ENCODE measurements at regions of chr15 and their contacts with region 1.

Region 1: DNA sequence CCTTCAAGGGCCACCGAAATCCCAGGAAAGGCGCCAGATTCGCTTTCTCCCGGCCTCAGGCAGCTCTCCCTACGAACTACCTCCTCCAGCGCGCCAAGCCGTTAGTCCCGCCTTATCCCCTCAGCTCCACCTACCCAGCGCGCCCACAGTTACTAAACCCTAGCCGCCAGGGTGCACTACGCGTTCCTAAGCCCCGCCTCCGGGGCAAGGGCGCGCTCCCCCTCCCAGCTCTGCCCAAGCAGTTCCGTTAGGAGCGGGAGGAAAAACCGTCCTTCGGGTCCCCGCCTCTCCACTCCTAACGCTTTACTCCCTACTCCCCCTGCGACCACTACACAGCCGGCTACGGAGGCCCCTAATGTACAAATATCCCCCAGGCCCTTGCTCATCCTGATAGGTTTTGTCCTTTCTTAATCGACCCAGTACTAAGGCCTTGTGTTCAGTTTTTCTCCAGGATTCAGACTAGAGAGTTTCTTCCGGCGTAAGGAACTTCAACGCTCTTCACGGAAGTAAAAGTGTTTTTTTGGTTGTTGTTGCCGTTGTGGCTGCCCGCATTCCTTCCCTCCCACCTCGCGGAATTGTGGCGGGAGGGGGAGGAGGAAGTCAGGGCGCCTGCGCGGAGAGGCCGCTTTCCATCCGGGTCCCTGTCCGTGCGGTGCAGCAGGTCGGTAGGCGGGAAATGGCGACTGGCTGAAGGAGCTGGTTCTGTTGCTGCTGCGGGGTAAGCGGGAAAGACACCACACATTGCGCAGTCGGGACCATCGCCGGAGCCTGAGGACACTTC is at the start of gene CTDSPL2:
- DNase-seq: peak; percentile 91 to 98 (median 92)
- ATAC-seq: peak; percentile 97
- H3K4me3 ChIP-seq: peak within 1 kb of the TSS; percentile 73
- H3K27ac ChIP-seq: peak within 1 kb of the TSS; percentile 98
- H3K4me1 ChIP-seq: peaks cover 0 to 5% of the 10 kb centered on the region in 2 experiments; a peak in 1 of 5 replicates
- H3K27me3 ChIP-seq: no peaks in the 10 kb centered on the region
- CTCF ChIP-seq: peak; percentile 48 to 64 (median 60); a peak in 5 of 6 replicates
- EP300 ChIP-seq: peak; percentile 66
- POLR2A ChIP-seq: peak; percentile 94
- RAD21 ChIP-seq: no peak
- polyA plus RNA-seq, gene CTDSPL2: 16.8 to 36.0 TPM

Region 2: GRCh38 chr15:43150191-43150929 is 1276.8 kb before region 1 on chr15:
- CTCF ChIA-PET with region 1: no interaction called
- POLR2A ChIA-PET with region 1: no interaction called
- in situ Hi-C with region 1: no loop called
- intact Hi-C with region 1: no loop called
- DNase-seq: peak in 3 of 4 experiments; percentile 17 to 61 (median 60)
- ATAC-seq: no peak
- H3K4me3 ChIP-seq: no peak overlapping the region
- H3K27ac ChIP-seq: no peak overlapping the region
- H3K4me1 ChIP-seq: no peaks in the 10 kb centered on the region
- H3K27me3 ChIP-seq: no peaks in the 10 kb centered on the region
- CTCF ChIP-seq: no peak
- EP300 ChIP-seq: no peak
- POLR2A ChIP-seq: no peak
- RAD21 ChIP-seq: no peak

Region 3: GRCh38 chr15:44215594-44215993 is 211.6 kb before region 1 on chr15:
- CTCF ChIA-PET with region 1: no interaction called
- POLR2A ChIA-PET with region 1: no interaction called
- in situ Hi-C with region 1: no loop called
- intact Hi-C with region 1: loop called (anchors 5 kb)
- DNase-seq: no peak
- ATAC-seq: no peak
- H3K4me3 ChIP-seq: no peak overlapping the region
- H3K27ac ChIP-seq: no peak overlapping the region
- H3K4me1 ChIP-seq: no peaks in the 10 kb centered on the region; a peak in 1 of 5 replicates
- H3K27me3 ChIP-seq: peaks cover 17 to 19% of the 10 kb centered on the region in 2 experiments
- CTCF ChIP-seq: no peak
- EP300 ChIP-seq: no peak
- POLR2A ChIP-seq: no peak
- RAD21 ChIP-seq: no peak

Region 4: DNA sequence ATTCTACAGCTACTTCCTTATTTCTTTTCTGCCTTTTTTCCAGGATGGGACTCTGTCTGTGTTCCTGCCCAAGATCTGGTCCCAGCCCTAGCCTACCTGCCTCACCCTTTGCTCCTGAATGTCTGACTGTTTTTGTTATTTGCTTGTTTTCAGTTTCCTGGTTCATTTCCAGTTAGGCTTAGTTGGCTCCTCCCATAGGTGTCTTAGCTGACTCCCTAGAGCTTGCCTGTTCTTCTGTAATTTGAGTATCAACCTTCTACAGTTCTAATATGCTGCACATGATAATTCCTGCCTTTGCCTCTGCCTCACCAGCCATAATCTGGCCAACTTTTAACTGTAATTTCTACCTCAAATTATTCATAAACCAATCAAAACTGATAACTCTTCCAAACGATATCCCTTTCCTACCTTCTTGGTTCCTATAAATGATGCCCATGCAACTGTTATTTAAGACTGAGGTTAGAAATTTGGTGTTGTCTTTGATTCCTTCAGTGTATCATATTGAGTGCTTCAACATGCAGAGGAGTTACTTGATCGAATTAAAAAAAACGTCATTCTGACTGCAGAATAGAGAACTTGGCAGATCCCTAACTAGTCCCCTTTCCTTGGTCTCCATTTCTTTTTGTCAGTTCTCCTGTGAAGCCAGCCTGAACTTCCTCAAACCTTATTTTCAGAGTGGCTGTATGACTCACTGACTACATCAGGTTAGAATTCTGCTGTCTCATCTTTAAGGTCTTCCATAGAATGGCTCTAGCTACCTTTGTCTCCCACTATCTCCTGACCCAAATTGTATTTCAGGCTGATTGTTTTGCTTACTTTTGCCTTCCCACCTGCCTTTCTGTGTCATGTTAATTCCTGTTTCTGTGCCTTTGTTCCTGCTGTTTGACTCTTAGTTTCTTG is 130.3 kb before region 1 on chr15:
- CTCF ChIA-PET with region 1: no interaction called
- POLR2A ChIA-PET with region 1: interaction called, 8 read pairs
- in situ Hi-C with region 1: no loop called
- intact Hi-C with region 1: loop called (anchors 5 kb)
- DNase-seq: peak; percentile 50 to 87 (median 68)
- ATAC-seq: peak; percentile 93
- H3K4me3 ChIP-seq: no peak overlapping the region
- H3K27ac ChIP-seq: peak overlapping the region; percentile 93
- H3K4me1 ChIP-seq: peaks cover 18 to 41% of the 10 kb centered on the region in 2 experiments
- H3K27me3 ChIP-seq: no peaks in the 10 kb centered on the region
- CTCF ChIP-seq: no peak
- EP300 ChIP-seq: peak; percentile 55
- POLR2A ChIP-seq: peak; percentile 27; the same call in 1 of the 2 replicates
- RAD21 ChIP-seq: no peak

Region 5: DNA sequence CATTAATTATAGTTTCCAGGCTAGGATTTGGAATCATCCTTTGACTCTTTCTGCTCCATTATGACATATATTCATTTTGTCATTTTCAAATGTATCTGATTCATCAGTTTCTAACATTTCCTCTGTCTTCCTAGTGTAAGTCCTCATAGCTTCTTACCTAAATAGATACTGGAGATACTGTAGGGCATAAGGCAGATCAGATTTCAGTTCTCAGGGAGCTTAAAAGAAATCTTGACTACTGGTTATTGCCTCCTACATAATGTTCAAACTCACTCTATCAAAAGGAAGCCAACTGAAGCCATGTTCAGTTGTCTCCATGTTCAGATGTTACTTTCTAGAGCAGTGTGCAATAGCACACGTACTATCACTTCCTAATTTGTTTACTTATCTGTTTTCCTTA is 29.3 kb before region 1 on chr15:
- CTCF ChIA-PET with region 1: no interaction called
- POLR2A ChIA-PET with region 1: interaction called, 10 read pairs
- in situ Hi-C with region 1: no loop called
- intact Hi-C with region 1: no loop called
- DNase-seq: no peak
- ATAC-seq: no peak
- H3K4me3 ChIP-seq: no peak overlapping the region
- H3K27ac ChIP-seq: no peak overlapping the region
- H3K4me1 ChIP-seq: no peaks in the 10 kb centered on the region
- H3K27me3 ChIP-seq: no peaks in the 10 kb centered on the region
- CTCF ChIP-seq: no peak
- EP300 ChIP-seq: no peak
- POLR2A ChIP-seq: no peak
- RAD21 ChIP-seq: no peak

Region 6: DNA sequence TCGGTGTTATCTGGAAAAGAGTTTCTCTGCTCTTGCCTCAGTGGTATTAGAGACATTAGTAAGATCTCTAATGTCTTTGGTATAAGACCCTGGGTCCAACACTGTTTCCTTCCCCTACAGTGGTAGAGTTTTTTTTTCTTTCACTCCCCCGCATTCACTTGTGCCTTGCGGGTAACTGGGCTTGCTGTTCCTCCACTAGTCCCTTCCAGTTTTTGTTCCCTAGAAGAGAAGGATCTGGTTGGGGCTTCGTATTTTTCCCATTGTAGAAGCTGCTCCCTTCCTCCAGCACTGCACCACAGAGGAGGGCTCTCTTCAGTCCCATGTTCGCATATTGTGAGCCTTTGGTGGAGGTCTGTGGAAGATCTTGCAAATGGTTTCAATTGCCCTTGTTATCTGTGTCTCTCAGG is 13.9 kb after region 1 on chr15:
- CTCF ChIA-PET with region 1: no interaction called
- POLR2A ChIA-PET with region 1: interaction called, 58 read pairs
- in situ Hi-C with region 1: no loop called
- intact Hi-C with region 1: no loop called
- DNase-seq: peak; percentile 13 to 45 (median 24)
- ATAC-seq: peak; percentile 77
- H3K4me3 ChIP-seq: no peak overlapping the region
- H3K27ac ChIP-seq: peak overlapping the region; percentile 64; the same call in 2 of the 3 replicates
- H3K4me1 ChIP-seq: peaks cover 5 to 18% of the 10 kb centered on the region in 2 experiments; a peak in 4 of 5 replicates
- H3K27me3 ChIP-seq: no peaks in the 10 kb centered on the region
- CTCF ChIP-seq: no peak
- EP300 ChIP-seq: no peak
- POLR2A ChIP-seq: no peak
- RAD21 ChIP-seq: peak in 1 of 2 experiments; percentile 0; a peak in 1 of 4 replicates